ENCODE measurements at regions of chr13 and their contacts with region 1.

Region 1: GRCh38 chr13:27251166-27252091 is at the start of gene RPL21:
- DNase-seq: peak; percentile 91 to 98
- ATAC-seq: peak; percentile 91 to 96 (median 93)
- H3K4me3 ChIP-seq: peak within 1 kb of the TSS; percentile 99
- H3K4me3 Mint-ChIP-seq: peak within 1 kb of the TSS; percentile 97
- H3K27ac ChIP-seq: peak within 1 kb of the TSS; percentile 100
- H3K27ac Mint-ChIP-seq: peak within 1 kb of the TSS; percentile 96 to 100
- H3K4me1 ChIP-seq: peaks cover 7% of the 10 kb centered on the region
- H3K4me1 Mint-ChIP-seq: peaks cover 36 to 50% of the 10 kb centered on the region in 2 donors
- H3K27me3 ChIP-seq: no peaks in the 10 kb centered on the region
- H3K27me3 Mint-ChIP-seq: no peaks in the 10 kb centered on the region
- CTCF ChIP-seq: no peak
- total RNA-seq, gene RPL21: 969 to 1,229 (median 1,130) TPM

Region 2: GRCh38 chr13:27130979-27131623 is 120.3 kb before region 1 on chr13:
- intact Hi-C with region 1: loop called (anchors 1 kb)
- DNase-seq: peak; percentile 53 to 84
- ATAC-seq: peak; percentile 88 to 97 (median 94)
- H3K4me3 ChIP-seq: no peak overlapping the region
- H3K4me3 Mint-ChIP-seq: peak overlapping the region; percentile 59
- H3K27ac ChIP-seq: peak overlapping the region; percentile 87
- H3K27ac Mint-ChIP-seq: peak overlapping the region; percentile 84 to 88
- H3K4me1 ChIP-seq: peaks cover 12% of the 10 kb centered on the region
- H3K4me1 Mint-ChIP-seq: peaks cover 55 to 57% of the 10 kb centered on the region in 2 donors
- H3K27me3 ChIP-seq: no peaks in the 10 kb centered on the region
- H3K27me3 Mint-ChIP-seq: no peaks in the 10 kb centered on the region
- CTCF ChIP-seq: no peak

Region 3: GRCh38 chr13:27171827-27172494 is 79.5 kb before region 1 on chr13:
- intact Hi-C with region 1: loop called (anchors 1 kb)
- DNase-seq: peak; percentile 93 to 96
- ATAC-seq: peak; percentile 86 to 97 (median 91)
- H3K4me3 ChIP-seq: peak overlapping the region; percentile 78
- H3K4me3 Mint-ChIP-seq: peak overlapping the region; percentile 94
- H3K27ac ChIP-seq: peak overlapping the region; percentile 96
- H3K27ac Mint-ChIP-seq: peak overlapping the region; percentile 92 to 97
- H3K4me1 ChIP-seq: peaks cover 19% of the 10 kb centered on the region
- H3K4me1 Mint-ChIP-seq: peaks cover 36 to 43% of the 10 kb centered on the region in 2 donors
- H3K27me3 ChIP-seq: no peaks in the 10 kb centered on the region
- H3K27me3 Mint-ChIP-seq: no peaks in the 10 kb centered on the region
- CTCF ChIP-seq: no peak

Region 4: GRCh38 chr13:27270594-27271520 is 19.4 kb after region 1 on chr13 and contains the start of gene RASL11A:
- intact Hi-C with region 1: loop called (anchors 2 kb)
- DNase-seq: peak; percentile 73 to 83
- ATAC-seq: peak; percentile 92 to 94 (median 92)
- H3K4me3 ChIP-seq: peak within 1 kb of the TSS; percentile 58
- H3K4me3 Mint-ChIP-seq: peak within 1 kb of the TSS; percentile 93
- H3K27ac ChIP-seq: peak within 1 kb of the TSS; percentile 27
- H3K27ac Mint-ChIP-seq: peak within 1 kb of the TSS; percentile 45 to 69
- H3K4me1 ChIP-seq: peaks cover 14% of the 10 kb centered on the region
- H3K4me1 Mint-ChIP-seq: peaks cover 14% of the 10 kb centered on the region in 2 donors
- H3K27me3 ChIP-seq: peaks cover 3% of the 10 kb centered on the region
- H3K27me3 Mint-ChIP-seq: peaks cover 18 to 27% of the 10 kb centered on the region in 2 donors
- CTCF ChIP-seq: peak; percentile 97
- total RNA-seq, gene RASL11A: 0.70 to 2.0 (median 1.4) TPM

Region 5: GRCh38 chr13:27449936-27450828 is 198.8 kb after region 1 on chr13 and contains the start of gene MTIF3:
- intact Hi-C with region 1: loop called (anchors 2 kb)
- DNase-seq: peak; percentile 87 to 99
- ATAC-seq: peak; percentile 81 to 93 (median 83)
- H3K4me3 ChIP-seq: peak within 1 kb of the TSS; percentile 84
- H3K4me3 Mint-ChIP-seq: peak within 1 kb of the TSS; percentile 95
- H3K27ac ChIP-seq: peak within 1 kb of the TSS; percentile 94
- H3K27ac Mint-ChIP-seq: peak within 1 kb of the TSS; percentile 97 to 98
- H3K4me1 ChIP-seq: peaks cover 20% of the 10 kb centered on the region
- H3K4me1 Mint-ChIP-seq: peaks cover 44 to 49% of the 10 kb centered on the region in 2 donors
- H3K27me3 ChIP-seq: no peaks in the 10 kb centered on the region
- H3K27me3 Mint-ChIP-seq: no peaks in the 10 kb centered on the region
- CTCF ChIP-seq: no peak
- total RNA-seq, gene MTIF3: 30.2 to 56.6 (median 36.8) TPM

Region 6: GRCh38 chr13:28557725-28558520 is 1306.5 kb after region 1 on chr13:
- intact Hi-C with region 1: no loop called
- DNase-seq: no peak
- ATAC-seq: no peak
- H3K4me3 ChIP-seq: no peak overlapping the region
- H3K4me3 Mint-ChIP-seq: no peak overlapping the region
- H3K27ac ChIP-seq: no peak overlapping the region
- H3K27ac Mint-ChIP-seq: no peak overlapping the region
- H3K4me1 ChIP-seq: no peaks in the 10 kb centered on the region
- H3K4me1 Mint-ChIP-seq: no peaks in the 10 kb centered on the region
- H3K27me3 ChIP-seq: no peaks in the 10 kb centered on the region
- H3K27me3 Mint-ChIP-seq: peaks cover 7 to 8% of the 10 kb centered on the region in 2 donors
- CTCF ChIP-seq: no peak